Naive thymus-derived CD4-positive, alpha-beta T cell (primary cell): ENCODE measurements at regions of chr7 and their contacts with region 1.

Region 1: GRCh38 chr7:104156842-104157277 is 51.0 kb downstream of the ORC5 start:
- DNase-seq: peak in 1 of 9 donors; percentile 28
- ATAC-seq: no peak
- H3K4me3 ChIP-seq: no peak overlapping the region
- H3K4me3 Mint-ChIP-seq: no peak overlapping the region
- H3K27ac ChIP-seq: no peak overlapping the region
- H3K27ac Mint-ChIP-seq: no peak overlapping the region
- H3K4me1 ChIP-seq: no peaks in the 10 kb centered on the region
- H3K4me1 Mint-ChIP-seq: peaks cover 0 to 6% (median 4%) of the 10 kb centered on the region in 7 donors
- H3K27me3 ChIP-seq: no peaks in the 10 kb centered on the region
- H3K27me3 Mint-ChIP-seq: no peaks in the 10 kb centered on the region

Region 2: DNA sequence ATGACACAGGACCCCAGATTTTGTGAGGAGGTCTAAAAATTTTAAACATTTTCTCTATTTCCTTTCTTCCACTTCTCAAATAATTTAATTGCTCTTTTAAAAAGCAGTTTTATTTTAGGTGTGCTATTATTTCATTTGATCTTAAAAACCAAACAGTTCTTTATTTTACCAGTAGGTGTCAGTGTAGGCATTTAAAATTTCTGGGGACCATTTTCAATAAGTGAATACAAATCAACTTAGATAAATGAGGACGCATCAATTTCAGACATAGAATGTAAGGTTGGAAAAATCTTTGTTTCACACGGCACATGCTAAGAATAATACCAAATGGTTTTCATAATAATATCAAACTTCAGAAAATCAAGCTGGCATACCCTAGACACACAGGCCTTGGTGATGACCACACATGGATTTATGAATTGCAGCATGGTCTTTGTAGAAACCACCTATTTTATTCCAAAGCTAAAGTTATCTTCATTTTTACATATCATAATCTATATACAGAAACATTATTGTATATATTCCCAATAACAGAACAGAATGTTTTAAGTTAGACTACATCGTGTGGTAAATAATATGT is 583.3 kb before region 1 on chr7:
- CTCF ChIA-PET with region 1: interaction called, 4 read pairs
- POLR2A ChIA-PET with region 1: no interaction called
- intact Hi-C with region 1: loop called in 1 of 2 experiments (anchors 2 kb)
- DNase-seq: peak in 6 of 9 donors; percentile 3 to 35 (median 23)
- ATAC-seq: no peak
- H3K4me3 ChIP-seq: no peak overlapping the region
- H3K4me3 Mint-ChIP-seq: no peak overlapping the region
- H3K27ac ChIP-seq: no peak overlapping the region
- H3K27ac Mint-ChIP-seq: no peak overlapping the region
- H3K4me1 ChIP-seq: no peaks in the 10 kb centered on the region
- H3K4me1 Mint-ChIP-seq: no peaks in the 10 kb centered on the region
- H3K27me3 ChIP-seq: no peaks in the 10 kb centered on the region
- H3K27me3 Mint-ChIP-seq: peaks cover 11 to 19% (median 15%) of the 10 kb centered on the region in 5 donors

Region 3: GRCh38 chr7:104142147-104142546 is 14.7 kb before region 1 on chr7:
- CTCF ChIA-PET with region 1: no interaction called
- POLR2A ChIA-PET with region 1: no interaction called
- intact Hi-C with region 1: loop called in 1 of 2 experiments (anchors 1 kb)
- DNase-seq: no peak
- ATAC-seq: no peak
- H3K4me3 ChIP-seq: no peak overlapping the region
- H3K4me3 Mint-ChIP-seq: no peak overlapping the region
- H3K27ac ChIP-seq: no peak overlapping the region
- H3K27ac Mint-ChIP-seq: no peak overlapping the region
- H3K4me1 ChIP-seq: no peaks in the 10 kb centered on the region
- H3K4me1 Mint-ChIP-seq: peaks cover 0 to 7% (median 3%) of the 10 kb centered on the region in 7 donors
- H3K27me3 ChIP-seq: no peaks in the 10 kb centered on the region
- H3K27me3 Mint-ChIP-seq: no peaks in the 10 kb centered on the region